ENCODE measurements at regions of chr6 and their contacts with region 1.

Region 1: GRCh38 chr6:138450445-138450844 is 46.4 kb downstream of the HEBP2 start:
- DNase-seq: no peak
- ATAC-seq: no peak
- H3K4me3 ChIP-seq: no peak overlapping the region
- H3K27ac ChIP-seq: no peak overlapping the region
- H3K4me1 ChIP-seq: no peaks in the 10 kb centered on the region
- H3K27me3 ChIP-seq: no peaks in the 10 kb centered on the region
- CTCF ChIP-seq: no peak
- POLR2A ChIP-seq: no peak
- RAD21 ChIP-seq: no peak

Region 2: GRCh38 chr6:138465007-138465645 is 14.7 kb after region 1 on chr6:
- CTCF ChIA-PET with region 1: no interaction called
- POLR2A ChIA-PET with region 1: interaction called, 11 read pairs
- dilution Hi-C with region 1: no loop called
- in situ Hi-C with region 1: no loop called
- intact Hi-C with region 1: no loop called
- DNase-seq: peak; percentile 98
- ATAC-seq: peak; percentile 98
- H3K4me3 ChIP-seq: no peak overlapping the region
- H3K27ac ChIP-seq: peak overlapping the region; percentile 55
- H3K4me1 ChIP-seq: peaks cover 9% of the 10 kb centered on the region; the same call in 1 of the 2 replicates
- H3K27me3 ChIP-seq: no peaks in the 10 kb centered on the region
- CTCF ChIP-seq: no peak
- POLR2A ChIP-seq: no peak
- RAD21 ChIP-seq: no peak; the same call in 1 of the 2 replicates

Region 3: GRCh38 chr6:138622967-138623366 is 172.5 kb after region 1 on chr6:
- CTCF ChIA-PET with region 1: no interaction called
- POLR2A ChIA-PET with region 1: no interaction called
- dilution Hi-C with region 1: no loop called
- in situ Hi-C with region 1: no loop called
- intact Hi-C with region 1: no loop called
- DNase-seq: no peak
- ATAC-seq: no peak
- H3K4me3 ChIP-seq: no peak overlapping the region
- H3K27ac ChIP-seq: no peak overlapping the region
- H3K4me1 ChIP-seq: 0 out of 2 replicates have a peak, but pooled peaks cover 1% of the 10 kb centered on the region
- H3K27me3 ChIP-seq: no peaks in the 10 kb centered on the region
- CTCF ChIP-seq: no peak
- POLR2A ChIP-seq: no peak
- RAD21 ChIP-seq: no peak